ENCODE measurements at regions of chr7 and their contacts with region 1.

Region 1: DNA sequence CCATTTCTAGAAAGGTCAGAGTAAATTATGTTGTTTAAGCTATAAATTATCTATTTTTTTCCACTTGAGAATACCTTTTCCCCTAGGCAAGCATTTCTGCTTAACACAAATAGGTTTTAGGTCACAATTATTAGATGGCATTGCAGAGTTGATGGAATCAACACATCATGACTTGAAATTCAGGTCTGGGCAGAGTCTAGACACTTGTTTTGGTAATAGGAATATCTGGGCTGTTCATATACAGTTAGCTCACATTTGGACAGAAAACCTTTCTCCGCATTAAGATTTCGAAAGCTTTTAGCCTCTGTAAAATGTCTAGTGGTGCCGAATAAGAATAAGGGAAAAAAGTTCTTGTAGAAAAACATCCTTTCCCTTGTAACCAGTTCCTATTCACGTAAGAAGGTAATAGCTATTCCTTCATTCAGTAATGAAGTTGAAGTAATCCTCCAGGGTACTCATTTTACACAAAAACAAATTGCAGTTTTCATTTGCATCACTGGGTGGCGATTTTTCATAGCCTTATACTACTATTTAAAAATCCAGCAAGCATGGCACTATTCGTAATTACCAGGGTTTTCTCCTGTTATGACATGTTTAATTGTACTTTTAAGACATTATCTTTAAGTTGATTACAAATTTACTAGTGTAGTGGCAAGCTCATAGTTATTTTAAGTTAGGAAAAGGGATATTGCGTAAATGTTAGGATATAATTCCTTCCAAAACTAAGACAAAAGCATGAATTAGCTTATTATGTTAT is 37.0 kb downstream of the RPA3 start:
- DNase-seq: peak; percentile 12
- H3K4me3 Mint-ChIP-seq: no peak overlapping the region
- H3K27ac Mint-ChIP-seq: no peak overlapping the region
- H3K4me1 Mint-ChIP-seq: peaks cover 12% of the 10 kb centered on the region
- H3K27me3 Mint-ChIP-seq: no peaks in the 10 kb centered on the region

Region 2: GRCh38 chr7:7369134-7369533 is 312.2 kb before region 1 on chr7:
- intact Hi-C with region 1: no loop called
- DNase-seq: no peak
- H3K4me3 Mint-ChIP-seq: no peak overlapping the region
- H3K27ac Mint-ChIP-seq: no peak overlapping the region
- H3K4me1 Mint-ChIP-seq: no peaks in the 10 kb centered on the region
- H3K27me3 Mint-ChIP-seq: no peaks in the 10 kb centered on the region

Region 3: GRCh38 chr7:7595451-7595850 is 85.9 kb before region 1 on chr7:
- intact Hi-C with region 1: loop called (anchors 5 kb)
- DNase-seq: no peak
- H3K4me3 Mint-ChIP-seq: no peak overlapping the region
- H3K27ac Mint-ChIP-seq: no peak overlapping the region
- H3K4me1 Mint-ChIP-seq: no peaks in the 10 kb centered on the region
- H3K27me3 Mint-ChIP-seq: no peaks in the 10 kb centered on the region

Region 4: GRCh38 chr7:7614018-7614741 is 67.2 kb before region 1 on chr7:
- intact Hi-C with region 1: no loop called
- DNase-seq: no peak
- H3K4me3 Mint-ChIP-seq: no peak overlapping the region
- H3K27ac Mint-ChIP-seq: no peak overlapping the region
- H3K4me1 Mint-ChIP-seq: peaks cover 10% of the 10 kb centered on the region
- H3K27me3 Mint-ChIP-seq: no peaks in the 10 kb centered on the region

Region 5: DNA sequence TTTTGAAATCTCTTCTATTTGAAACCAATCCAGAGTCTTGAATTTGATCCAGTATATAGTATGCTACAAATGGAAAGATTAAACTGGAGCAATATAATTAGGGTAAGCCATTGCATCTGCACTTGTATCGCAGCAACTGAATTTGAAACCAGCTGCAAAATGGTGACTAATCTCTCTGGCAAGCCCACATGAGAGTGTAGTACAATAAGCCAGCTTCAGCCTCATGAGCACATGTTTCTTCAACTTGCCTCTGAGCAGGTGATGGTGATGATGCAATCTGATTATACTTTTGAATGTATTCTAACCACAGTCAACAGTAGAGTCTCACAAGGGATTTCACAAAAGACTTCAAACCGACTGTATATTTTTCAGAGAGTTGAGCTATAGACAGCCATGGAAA is 37.9 kb after region 1 on chr7:
- intact Hi-C with region 1: loop called (anchors 5 kb)
- DNase-seq: peak; percentile 50
- H3K4me3 Mint-ChIP-seq: peak overlapping the region; percentile 56
- H3K27ac Mint-ChIP-seq: peak overlapping the region; percentile 80
- H3K4me1 Mint-ChIP-seq: peaks cover 27% of the 10 kb centered on the region
- H3K27me3 Mint-ChIP-seq: peaks cover 2% of the 10 kb centered on the region

Region 6: DNA sequence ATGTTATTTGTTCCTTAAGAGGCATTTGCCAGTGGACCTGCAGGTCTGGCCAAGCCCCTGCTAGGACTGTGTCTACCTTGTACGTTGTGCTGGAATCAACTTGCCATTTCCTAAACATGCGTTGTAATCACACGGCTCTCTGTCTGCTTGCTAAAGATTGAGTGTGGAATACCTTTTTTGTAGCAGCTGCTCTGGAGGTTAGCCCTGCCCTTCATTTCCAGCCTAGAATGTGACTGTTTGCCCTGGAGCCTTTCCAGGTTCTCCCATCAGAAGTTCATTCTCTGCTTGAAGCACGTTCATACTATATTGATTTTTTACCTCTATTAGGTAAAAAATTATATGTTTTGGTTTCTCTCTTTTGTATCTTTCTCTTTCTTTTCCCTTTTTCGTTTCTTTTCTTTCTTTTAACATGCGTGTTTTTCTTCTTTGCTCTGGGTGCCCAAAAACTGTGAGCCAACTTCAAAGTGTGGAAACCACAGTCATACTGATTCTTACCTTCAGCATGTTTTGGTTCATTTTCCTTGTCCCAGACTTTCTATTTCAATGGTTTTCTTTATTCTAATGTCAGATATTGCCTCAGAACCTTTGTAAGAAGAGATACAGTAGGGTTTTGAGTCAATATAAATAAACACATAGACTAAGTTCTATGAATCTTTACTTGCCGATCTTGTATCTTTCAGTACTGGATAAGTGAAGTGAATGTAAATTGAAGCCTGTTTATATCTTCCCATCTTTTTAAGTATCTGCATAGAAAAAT is 148.9 kb after region 1 on chr7:
- intact Hi-C with region 1: loop called (anchors 5 kb)
- DNase-seq: no peak
- H3K4me3 Mint-ChIP-seq: no peak overlapping the region
- H3K27ac Mint-ChIP-seq: peak overlapping the region; percentile 61
- H3K4me1 Mint-ChIP-seq: peaks cover 7% of the 10 kb centered on the region
- H3K27me3 Mint-ChIP-seq: peaks cover 2% of the 10 kb centered on the region

Region 7: DNA sequence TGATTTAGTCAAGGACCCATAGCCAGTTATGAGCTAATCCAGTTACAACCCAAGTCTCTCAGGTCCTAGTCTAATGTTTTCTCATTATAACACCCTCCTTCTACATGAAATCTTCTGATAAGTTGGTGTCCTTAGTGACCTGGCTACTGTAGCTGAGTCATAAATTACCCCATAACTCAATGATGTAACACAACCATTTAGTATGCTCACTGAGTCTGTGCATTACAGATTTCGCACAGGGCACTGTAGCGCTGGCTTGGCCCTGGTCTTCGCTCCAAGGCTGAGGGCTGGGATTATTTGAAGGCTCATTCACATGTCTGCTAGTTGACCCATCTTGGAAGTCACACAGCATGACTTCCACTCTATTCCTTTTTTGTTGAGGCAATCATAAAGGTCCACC is 251.2 kb after region 1 on chr7:
- intact Hi-C with region 1: no loop called
- DNase-seq: no peak
- H3K4me3 Mint-ChIP-seq: no peak overlapping the region
- H3K27ac Mint-ChIP-seq: no peak overlapping the region
- H3K4me1 Mint-ChIP-seq: peaks cover 11% of the 10 kb centered on the region
- H3K27me3 Mint-ChIP-seq: peaks cover 5% of the 10 kb centered on the region

Region 8: GRCh38 chr7:8035647-8036518 is 354.5 kb after region 1 on chr7:
- intact Hi-C with region 1: loop called (anchors 1 kb)
- DNase-seq: no peak
- H3K4me3 Mint-ChIP-seq: no peak overlapping the region
- H3K27ac Mint-ChIP-seq: no peak overlapping the region
- H3K4me1 Mint-ChIP-seq: peaks cover 18% of the 10 kb centered on the region
- H3K27me3 Mint-ChIP-seq: no peaks in the 10 kb centered on the region

Region 9: GRCh38 chr7:8143151-8143874 is 462.0 kb after region 1 on chr7:
- intact Hi-C with region 1: no loop called
- DNase-seq: no peak
- H3K4me3 Mint-ChIP-seq: no peak overlapping the region
- H3K27ac Mint-ChIP-seq: no peak overlapping the region
- H3K4me1 Mint-ChIP-seq: peaks cover 11% of the 10 kb centered on the region
- H3K27me3 Mint-ChIP-seq: no peaks in the 10 kb centered on the region

Region 10: GRCh38 chr7:8190119-8190895 is 508.9 kb after region 1 on chr7:
- intact Hi-C with region 1: loop called (anchors 1 kb)
- DNase-seq: peak; percentile 41
- H3K4me3 Mint-ChIP-seq: no peak overlapping the region
- H3K27ac Mint-ChIP-seq: no peak overlapping the region
- H3K4me1 Mint-ChIP-seq: peaks cover 41% of the 10 kb centered on the region
- H3K27me3 Mint-ChIP-seq: peaks cover 5% of the 10 kb centered on the region

Region 11: DNA sequence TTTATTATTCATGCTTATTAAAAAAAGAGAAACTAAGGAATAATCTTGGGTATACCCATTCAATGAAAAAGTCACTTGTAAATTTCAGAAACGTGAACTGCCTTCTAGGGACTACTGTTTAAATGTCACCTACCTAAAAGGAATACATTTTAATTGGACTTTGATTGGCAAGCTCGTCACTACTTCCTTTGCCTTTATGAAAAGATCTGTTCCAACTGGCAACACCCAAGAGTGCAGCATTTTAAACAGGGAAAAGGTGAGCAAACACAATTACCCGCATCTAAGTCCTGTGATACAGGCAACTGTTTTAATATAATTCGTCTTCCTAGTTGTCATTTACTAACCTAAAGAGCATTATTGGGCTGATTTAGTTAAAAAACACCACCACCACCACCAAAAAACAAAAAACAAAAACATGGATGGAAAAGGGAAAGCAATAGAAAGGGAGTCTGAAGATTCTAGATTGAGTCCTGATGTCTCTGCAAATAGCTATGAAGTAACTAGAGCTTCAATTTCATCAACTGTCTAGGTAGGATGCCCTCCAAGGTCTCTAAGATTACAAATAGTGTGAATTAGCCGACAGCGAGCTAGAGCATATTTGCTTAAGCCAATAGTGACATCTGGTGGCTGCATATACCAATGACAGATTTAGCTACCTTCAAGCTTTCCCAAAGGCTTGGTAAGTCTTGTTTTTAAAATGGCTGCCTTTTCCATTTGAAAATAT is 614.4 kb after region 1 on chr7:
- intact Hi-C with region 1: loop called (anchors 2 kb)
- DNase-seq: peak; percentile 8
- H3K4me3 Mint-ChIP-seq: no peak overlapping the region
- H3K27ac Mint-ChIP-seq: no peak overlapping the region
- H3K4me1 Mint-ChIP-seq: peaks cover 4% of the 10 kb centered on the region
- H3K27me3 Mint-ChIP-seq: peaks cover 13% of the 10 kb centered on the region

Measured in activated T-helper 1 cell treated with anti-CD3 and anti-CD28 coated beads, Interleukin-12 subunit alpha, Interleukin-12 subunit beta, Interleukin-2, Interleukin-4 antibody, amounts not matched to agents 30 ng/mL and 10 ng/mL and 1 ng/mL, durations not matched to agents 14 hours and 24 hours and 36 hours (primary cell).